CD8-positive, alpha-beta T cell (primary cell): ENCODE measurements at regions of chr1 and their contacts with region 1.

Region 1: DNA sequence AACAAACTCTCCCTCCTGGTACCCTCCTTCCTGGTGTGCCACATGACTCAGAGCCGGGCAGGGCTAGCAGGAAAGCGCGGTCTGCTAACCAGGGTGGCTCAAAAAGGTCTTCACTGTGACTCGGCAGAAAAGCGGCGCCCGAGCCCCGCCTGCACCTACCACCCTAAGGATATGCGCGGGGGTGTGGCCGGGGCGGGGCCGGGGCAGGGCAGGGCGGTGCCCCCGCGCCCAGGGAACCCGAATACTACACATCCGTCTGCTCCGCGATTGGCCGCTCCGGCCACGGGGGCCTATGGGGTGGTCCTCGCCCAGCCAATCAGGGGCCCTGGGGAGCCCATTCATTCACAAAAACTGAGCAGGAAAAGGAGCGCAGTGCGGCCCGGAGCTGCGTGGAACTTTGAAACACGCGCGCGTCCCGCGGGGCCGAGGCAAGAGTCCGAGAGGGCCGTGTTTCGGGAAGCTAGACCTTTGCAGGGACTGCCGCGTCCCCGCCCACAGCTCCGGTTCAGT is 1.7 kb downstream of the LRP8 start:
- DNase-seq: peak; percentile 78 to 94 (median 92)
- ATAC-seq: peak; percentile 89
- H3K4me3 ChIP-seq: peak overlapping the region; percentile 74 to 82
- H3K4me3 Mint-ChIP-seq: peak overlapping the region; percentile 94
- H3K27ac ChIP-seq: peak overlapping the region; percentile 26 to 66
- H3K27ac Mint-ChIP-seq: peak overlapping the region; percentile 77
- H3K4me1 ChIP-seq: peaks cover 6% of the 10 kb centered on the region
- H3K4me1 Mint-ChIP-seq: peaks cover 16% of the 10 kb centered on the region
- H3K27me3 ChIP-seq: no peaks in the 10 kb centered on the region
- H3K27me3 Mint-ChIP-seq: no peaks in the 10 kb centered on the region
- CTCF ChIP-seq: no peak

Region 2: DNA sequence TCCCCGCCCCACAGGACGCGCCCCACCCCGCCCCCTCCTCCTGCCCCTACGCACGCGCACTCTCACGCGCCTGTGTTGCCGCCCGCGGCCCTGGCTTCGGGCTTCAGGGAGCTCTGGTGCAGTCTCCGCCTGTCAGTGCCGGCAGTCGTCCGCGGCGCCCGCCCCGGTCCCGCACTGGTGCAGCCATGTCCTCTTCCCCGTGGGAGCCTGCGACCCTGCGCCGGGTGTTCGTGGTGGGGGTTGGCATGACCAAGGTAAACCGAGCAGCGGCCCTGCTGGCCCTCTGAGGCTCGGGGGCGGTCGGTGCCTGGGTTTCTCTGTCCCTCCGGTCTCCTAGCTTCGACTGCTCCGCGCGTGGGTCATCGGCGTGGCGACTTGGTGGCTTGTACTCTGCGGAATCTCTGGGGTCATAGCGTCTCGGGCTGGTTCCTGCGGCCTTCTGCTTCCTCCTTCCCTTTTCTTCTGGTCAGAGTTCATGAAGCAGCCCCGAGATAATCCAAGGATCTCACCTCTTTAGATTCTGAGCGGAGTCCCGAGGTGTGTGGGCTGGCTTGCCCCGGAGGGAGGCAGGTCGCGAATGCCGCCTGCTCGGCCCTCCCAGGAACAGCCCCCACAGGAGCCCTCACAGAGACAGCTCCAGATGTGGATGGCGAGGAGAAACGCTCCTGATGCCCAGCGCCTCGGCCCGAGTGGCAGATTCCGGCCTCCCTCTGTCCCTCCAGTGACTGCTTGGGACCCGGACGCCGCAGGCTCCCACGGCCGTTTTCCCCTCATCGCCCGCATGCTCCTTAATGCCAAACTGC is 398.7 kb before region 1 on chr1 and contains the start of gene SCP2:
- CTCF ChIA-PET with region 1: no interaction called
- POLR2A ChIA-PET with region 1: no interaction called
- intact Hi-C with region 1: loop called in 1 of 2 experiments (anchors 10 kb)
- DNase-seq: peak; percentile 43 to 90 (median 79)
- ATAC-seq: peak; percentile 95
- H3K4me3 ChIP-seq: peak within 1 kb of the TSS; percentile 83 to 88
- H3K4me3 Mint-ChIP-seq: peak within 1 kb of the TSS; percentile 87
- H3K27ac ChIP-seq: peak within 1 kb of the TSS; percentile 8 to 40
- H3K27ac Mint-ChIP-seq: peak within 1 kb of the TSS; percentile 57
- H3K4me1 ChIP-seq: peaks cover 16% of the 10 kb centered on the region
- H3K4me1 Mint-ChIP-seq: peaks cover 23% of the 10 kb centered on the region
- H3K27me3 ChIP-seq: no peaks in the 10 kb centered on the region
- H3K27me3 Mint-ChIP-seq: no peaks in the 10 kb centered on the region
- CTCF ChIP-seq: no peak
- total RNA-seq, gene SCP2: 25.5 to 27.6 TPM

Region 3: DNA sequence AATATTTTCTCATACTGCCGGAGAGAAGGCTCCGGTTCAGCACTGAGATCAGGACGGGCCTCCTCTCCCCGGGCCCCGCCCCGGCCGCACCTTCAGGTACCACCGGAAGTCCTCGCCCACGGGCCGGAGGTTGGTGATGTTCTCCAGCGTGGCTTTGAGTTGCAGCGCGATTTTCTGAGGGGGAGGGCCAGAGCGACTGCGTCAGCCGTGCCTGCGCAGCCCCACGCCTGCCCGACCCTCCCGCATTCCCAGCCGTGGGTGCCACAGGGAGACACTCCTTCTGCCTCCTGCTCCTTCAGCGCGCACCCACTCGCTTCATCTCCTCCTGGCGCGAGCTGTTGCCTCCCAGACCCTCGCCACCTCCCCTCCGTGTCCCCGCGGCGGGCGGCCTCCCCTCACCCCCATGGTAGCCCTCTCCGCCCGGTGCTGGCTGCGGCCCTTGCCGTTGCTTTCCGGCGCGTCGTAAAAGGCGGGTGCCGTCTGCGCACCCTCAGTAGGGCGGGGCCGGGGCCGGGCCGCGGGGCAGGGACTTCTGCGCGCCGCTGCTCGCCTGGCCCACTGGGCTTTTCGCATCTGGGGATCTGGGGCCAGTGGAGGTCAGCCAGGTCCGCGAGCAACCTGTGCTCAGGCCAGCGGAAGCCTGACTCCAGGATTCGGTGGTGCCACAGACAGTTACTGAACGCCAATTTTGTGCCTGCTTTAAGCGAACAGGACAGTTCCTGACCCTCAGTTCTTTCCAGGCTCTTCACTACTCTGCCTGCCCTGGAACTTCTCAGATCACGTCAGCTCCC is 105.8 kb before region 1 on chr1 and contains the start of gene CZIB:
- CTCF ChIA-PET with region 1: no interaction called
- POLR2A ChIA-PET with region 1: no interaction called
- intact Hi-C with region 1: loop called (anchors 1 to 5 kb)
- DNase-seq: peak; percentile 83 to 95 (median 92)
- ATAC-seq: peak; percentile 92
- H3K4me3 ChIP-seq: peak within 1 kb of the TSS; percentile 80 to 92
- H3K4me3 Mint-ChIP-seq: peak within 1 kb of the TSS; percentile 94
- H3K27ac ChIP-seq: peak within 1 kb of the TSS; percentile 94
- H3K27ac Mint-ChIP-seq: peak within 1 kb of the TSS; percentile 98
- H3K4me1 ChIP-seq: peaks cover 16% of the 10 kb centered on the region
- H3K4me1 Mint-ChIP-seq: peaks cover 18% of the 10 kb centered on the region
- H3K27me3 ChIP-seq: no peaks in the 10 kb centered on the region
- H3K27me3 Mint-ChIP-seq: no peaks in the 10 kb centered on the region
- CTCF ChIP-seq: no peak
- total RNA-seq, gene CZIB: 26.7 to 27.4 TPM

Region 4: GRCh38 chr1:53238197-53239155 is 87.7 kb before region 1 on chr1 and contains the start of gene MAGOH:
- CTCF ChIA-PET with region 1: no interaction called
- POLR2A ChIA-PET with region 1: no interaction called
- intact Hi-C with region 1: loop called (anchors 1 to 2 kb)
- DNase-seq: peak; percentile 87 to 97 (median 95)
- ATAC-seq: peak; percentile 97
- H3K4me3 ChIP-seq: peak within 1 kb of the TSS; percentile 94 to 100
- H3K4me3 Mint-ChIP-seq: peak within 1 kb of the TSS; percentile 97
- H3K27ac ChIP-seq: peak within 1 kb of the TSS; percentile 89 to 95
- H3K27ac Mint-ChIP-seq: peak within 1 kb of the TSS; percentile 96
- H3K4me1 ChIP-seq: peaks cover 17% of the 10 kb centered on the region
- H3K4me1 Mint-ChIP-seq: peaks cover 33% of the 10 kb centered on the region
- H3K27me3 ChIP-seq: no peaks in the 10 kb centered on the region
- H3K27me3 Mint-ChIP-seq: no peaks in the 10 kb centered on the region
- CTCF ChIP-seq: no peak
- total RNA-seq, gene MAGOH: 77.2 to 79.5 TPM

Region 5: GRCh38 chr1:53367503-53368304 is 41.6 kb after region 1 on chr1:
- CTCF ChIA-PET with region 1: no interaction called
- POLR2A ChIA-PET with region 1: interaction called, 4 read pairs
- intact Hi-C with region 1: loop called in 1 of 2 experiments (anchors 5 kb)
- DNase-seq: peak in 8 of 9 experiments; percentile 20 to 67 (median 39)
- ATAC-seq: peak; percentile 77
- H3K4me3 ChIP-seq: peak overlapping the region; percentile 21 to 36
- H3K4me3 Mint-ChIP-seq: peak overlapping the region; percentile 87
- H3K27ac ChIP-seq: peak overlapping the region in 1 of 2 experiments; percentile 62
- H3K27ac Mint-ChIP-seq: peak overlapping the region; percentile 92
- H3K4me1 ChIP-seq: peaks cover 19% of the 10 kb centered on the region
- H3K4me1 Mint-ChIP-seq: peaks cover 26% of the 10 kb centered on the region
- H3K27me3 ChIP-seq: no peaks in the 10 kb centered on the region
- H3K27me3 Mint-ChIP-seq: no peaks in the 10 kb centered on the region
- CTCF ChIP-seq: no peak

Region 6: DNA sequence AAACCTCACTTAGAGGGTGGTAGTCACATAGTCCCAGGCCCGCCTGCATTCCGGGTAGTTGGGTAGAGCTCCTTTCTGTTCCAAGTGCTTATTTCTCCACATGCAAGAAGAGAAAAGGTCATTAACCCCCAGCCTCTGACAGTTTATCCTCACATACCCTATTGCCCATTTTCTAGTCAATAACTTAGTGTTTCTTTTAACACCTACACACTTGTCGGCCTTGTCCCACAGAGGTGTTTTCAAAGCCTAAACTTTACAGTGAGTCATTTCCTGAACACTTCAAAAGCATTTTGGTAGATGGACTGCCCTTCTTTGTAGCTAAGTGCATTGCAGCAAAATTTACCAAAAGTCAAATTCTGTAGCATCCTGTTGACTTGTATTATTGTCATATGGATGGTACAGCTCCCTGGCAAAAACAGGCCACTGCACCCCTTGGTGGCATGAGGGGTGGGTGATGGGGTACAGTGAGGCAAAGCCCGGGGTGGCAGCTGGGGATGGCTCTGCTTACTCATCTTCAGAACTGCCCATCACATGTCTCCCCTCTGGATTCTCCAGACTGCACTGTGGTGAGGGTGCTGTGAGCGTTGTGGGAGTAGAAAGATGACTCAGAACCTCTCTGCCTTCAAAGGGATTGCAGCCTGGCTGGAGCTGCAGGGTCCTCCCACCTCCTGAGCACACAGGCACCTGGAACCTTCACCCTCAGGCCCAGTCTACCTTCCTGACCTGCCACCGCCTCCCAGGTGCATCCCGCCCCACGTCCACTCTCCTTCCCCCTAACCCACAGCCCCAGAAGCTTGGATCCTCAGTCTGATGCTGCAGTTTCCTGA is 87.2 kb after region 1 on chr1:
- CTCF ChIA-PET with region 1: no interaction called
- POLR2A ChIA-PET with region 1: interaction called, 3 read pairs
- intact Hi-C with region 1: loop called (anchors 1 to 2 kb)
- DNase-seq: peak in 8 of 9 experiments; percentile 44 to 86 (median 70)
- ATAC-seq: peak; percentile 65
- H3K4me3 ChIP-seq: no peak overlapping the region
- H3K4me3 Mint-ChIP-seq: peak overlapping the region; percentile 59
- H3K27ac ChIP-seq: peak overlapping the region; percentile 57 to 93
- H3K27ac Mint-ChIP-seq: peak overlapping the region; percentile 97
- H3K4me1 ChIP-seq: peaks cover 38% of the 10 kb centered on the region
- H3K4me1 Mint-ChIP-seq: peaks cover 62% of the 10 kb centered on the region
- H3K27me3 ChIP-seq: no peaks in the 10 kb centered on the region
- H3K27me3 Mint-ChIP-seq: no peaks in the 10 kb centered on the region
- CTCF ChIP-seq: no peak

Region 7: GRCh38 chr1:53837924-53838652 is 511.9 kb after region 1 on chr1 and contains the start of gene NDC1:
- CTCF ChIA-PET with region 1: no interaction called
- POLR2A ChIA-PET with region 1: no interaction called
- intact Hi-C with region 1: loop called in 1 of 2 experiments (anchors 10 kb)
- DNase-seq: peak; percentile 77 to 96 (median 88)
- ATAC-seq: peak; percentile 90
- H3K4me3 ChIP-seq: peak within 1 kb of the TSS; percentile 82 to 93
- H3K4me3 Mint-ChIP-seq: peak within 1 kb of the TSS; percentile 91
- H3K27ac ChIP-seq: peak within 1 kb of the TSS; percentile 91 to 100
- H3K27ac Mint-ChIP-seq: peak within 1 kb of the TSS; percentile 98
- H3K4me1 ChIP-seq: peaks cover 16% of the 10 kb centered on the region
- H3K4me1 Mint-ChIP-seq: peaks cover 26% of the 10 kb centered on the region
- H3K27me3 ChIP-seq: no peaks in the 10 kb centered on the region
- H3K27me3 Mint-ChIP-seq: peaks cover 3% of the 10 kb centered on the region
- CTCF ChIP-seq: no peak
- total RNA-seq, gene NDC1: 6.1 to 6.6 TPM